BJ (cell line): ENCODE measurements at regions of chr14 and their contacts with region 1.

Region 1: GRCh38 chr14:95993768-95994592 is 45.2 kb upstream of the C14orf132 start:
- DNase-seq: no peak
- H3K4me3 ChIP-seq: no peak overlapping the region
- H3K27me3 ChIP-seq: no peaks in the 10 kb centered on the region
- CTCF ChIP-seq: peak; percentile 78

Region 2: GRCh38 chr14:95561001-95561412 is 433.0 kb before region 1 on chr14:
- CTCF ChIA-PET with region 1: interaction called, 74 read pairs
- POLR2A ChIA-PET with region 1: no interaction called
- DNase-seq: peak; percentile 17
- H3K4me3 ChIP-seq: no peak overlapping the region
- H3K27me3 ChIP-seq: no peaks in the 10 kb centered on the region
- CTCF ChIP-seq: peak; percentile 89

Region 3: DNA sequence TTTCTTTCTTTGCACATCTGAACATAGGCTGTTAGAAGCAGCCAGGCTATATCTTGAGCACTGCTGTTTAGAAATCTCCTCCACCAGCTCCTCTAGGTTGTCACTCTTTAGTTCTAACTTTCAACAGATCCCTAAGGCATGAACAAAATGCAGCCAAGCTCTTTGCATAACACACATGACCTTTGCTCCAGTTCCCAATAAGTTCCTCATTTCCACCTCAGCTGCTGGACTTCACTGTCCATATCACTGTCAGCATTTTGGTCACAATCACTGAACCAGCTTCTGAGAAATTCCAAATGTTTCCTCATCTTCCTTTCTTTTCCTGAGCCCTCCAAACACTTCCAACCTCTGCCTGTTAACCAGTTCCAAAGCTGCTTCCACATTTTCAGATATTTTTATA is 17.6 kb after region 1 on chr14:
- CTCF ChIA-PET with region 1: interaction called, 13 read pairs
- POLR2A ChIA-PET with region 1: no interaction called
- DNase-seq: no peak
- H3K4me3 ChIP-seq: no peak overlapping the region
- H3K27me3 ChIP-seq: no peaks in the 10 kb centered on the region
- CTCF ChIP-seq: no peak

Region 4: GRCh38 chr14:96090441-96091133 is 96.6 kb after region 1 on chr14:
- CTCF ChIA-PET with region 1: interaction called, 194 read pairs
- POLR2A ChIA-PET with region 1: no interaction called
- DNase-seq: no peak
- H3K4me3 ChIP-seq: no peak overlapping the region
- H3K27me3 ChIP-seq: no peaks in the 10 kb centered on the region
- CTCF ChIP-seq: peak; percentile 26